ENCODE measurements at regions of chr18 and their contacts with region 1.

Region 1: DNA sequence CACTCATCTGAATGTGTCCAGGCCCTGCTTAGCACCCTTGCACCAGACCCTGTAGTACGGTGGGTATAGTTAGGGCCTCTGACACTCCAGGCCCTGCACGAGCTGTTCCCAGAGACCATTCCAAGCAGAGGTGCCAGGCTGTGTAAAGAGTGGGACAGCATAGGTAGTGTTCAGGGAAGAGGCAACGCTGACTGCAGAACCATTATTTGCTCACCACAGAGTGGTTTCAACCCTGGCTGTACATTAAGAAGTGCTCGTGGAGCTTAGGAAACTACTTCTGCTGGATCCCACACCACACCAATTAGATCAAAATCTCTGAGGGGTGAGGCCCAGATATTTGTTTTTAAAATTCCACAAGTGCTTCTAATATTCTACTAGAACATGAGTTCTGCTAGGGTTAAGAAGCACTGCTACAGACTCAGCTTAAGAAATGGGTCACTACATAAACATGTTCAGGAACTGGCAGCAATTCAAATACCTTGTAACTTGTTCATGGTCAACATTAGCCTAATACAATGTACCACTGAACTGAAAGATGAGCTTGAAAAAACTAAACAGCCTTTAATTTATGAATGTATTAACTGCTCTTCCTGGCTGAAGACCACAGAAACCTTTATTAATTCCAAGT is 183.0 kb downstream of the MYO5B start:
- DNase-seq: no peak
- H3K4me3 ChIP-seq: no peak overlapping the region
- H3K27ac ChIP-seq: peak overlapping the region; percentile 17 to 69
- H3K4me1 ChIP-seq: peaks cover 0 to 4% of the 10 kb centered on the region in 2 donors
- H3K27me3 ChIP-seq: no peaks in the 10 kb centered on the region
- CTCF ChIP-seq: no peak
- POLR2A ChIP-seq: no peak

Region 2: GRCh38 chr18:49985236-49985635 is 26.7 kb before region 1 on chr18:
- intact Hi-C with region 1: loop called (anchors 2 kb)
- DNase-seq: no peak
- H3K4me3 ChIP-seq: no peak overlapping the region
- H3K27ac ChIP-seq: no peak overlapping the region
- H3K4me1 ChIP-seq: no peaks in the 10 kb centered on the region
- H3K27me3 ChIP-seq: no peaks in the 10 kb centered on the region
- CTCF ChIP-seq: no peak
- POLR2A ChIP-seq: no peak

Region 3: DNA sequence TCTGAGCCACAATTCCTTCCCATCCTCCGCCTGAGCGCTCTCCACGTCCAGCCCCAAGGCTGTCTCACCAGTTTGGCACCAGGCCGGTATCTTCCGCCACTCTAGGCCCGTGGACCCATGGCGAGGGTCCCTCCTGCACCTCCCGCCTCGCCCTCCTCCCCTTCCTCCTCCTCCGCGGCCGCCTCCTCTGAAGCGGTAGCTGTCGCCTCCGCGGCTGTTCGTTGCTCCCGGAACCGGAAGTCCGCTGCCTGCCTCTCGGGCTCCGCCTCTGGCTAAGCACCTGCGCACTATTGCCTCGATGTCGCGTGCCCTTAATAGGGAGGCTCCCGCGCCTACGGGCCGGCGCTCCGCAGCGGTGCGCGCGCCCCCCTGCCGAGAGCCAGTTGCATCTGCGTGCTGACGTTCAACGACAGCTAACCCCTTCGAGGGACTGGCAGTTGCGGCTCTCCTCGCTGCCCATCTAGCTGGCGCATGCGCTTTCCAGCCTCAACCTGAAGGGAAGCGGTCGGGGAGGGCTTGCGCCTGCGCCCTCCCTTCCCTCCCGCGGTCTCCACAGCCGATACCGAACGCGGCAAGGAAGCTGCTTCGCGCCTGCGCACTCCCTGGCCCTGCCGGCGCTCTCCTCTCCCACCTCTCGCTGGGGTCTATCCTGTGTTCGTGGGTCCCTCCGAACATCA is 269.5 kb after region 1 on chr18 and contains the start of gene MBD1:
- intact Hi-C with region 1: no loop called
- DNase-seq: peak; percentile 94 to 96
- H3K4me3 ChIP-seq: peak within 1 kb of the TSS; percentile 72 to 95 (median 91)
- H3K27ac ChIP-seq: peak within 1 kb of the TSS; percentile 94
- H3K4me1 ChIP-seq: peaks cover 0 to 5% of the 10 kb centered on the region in 2 donors
- H3K27me3 ChIP-seq: no peaks in the 10 kb centered on the region
- CTCF ChIP-seq: peak in 1 of 3 donors; percentile 31
- POLR2A ChIP-seq: peak; percentile 81
- total RNA-seq, gene MBD1: 51.2 to 82.3 (median 71.1) TPM